ENCODE measurements at regions of chr3 and their contacts with region 1.

Region 1: GRCh38 chr3:122383771-122384697 is at the start of gene FAM162A:
- DNase-seq: peak; percentile 97
- ATAC-seq: peak; percentile 91
- H3K4me3 Mint-ChIP-seq: peak within 1 kb of the TSS; percentile 92
- H3K27ac Mint-ChIP-seq: peak within 1 kb of the TSS; percentile 98
- H3K4me1 Mint-ChIP-seq: peaks cover 66% of the 10 kb centered on the region
- H3K27me3 Mint-ChIP-seq: no peaks in the 10 kb centered on the region
- total RNA-seq, gene FAM162A: 163 to 181 TPM

Region 2: GRCh38 chr3:120742198-120742849 is 1641.7 kb before region 1 on chr3 and contains the starts of genes GTF2E1 and RABL3:
- CTCF ChIA-PET with region 1: no interaction called
- POLR2A ChIA-PET with region 1: no interaction called
- intact Hi-C with region 1: loop called in 1 of 2 experiments (anchors 2 kb)
- DNase-seq: peak; percentile 96
- ATAC-seq: peak; percentile 99
- H3K4me3 Mint-ChIP-seq: peak within 1 kb of the TSS; percentile 98
- H3K27ac Mint-ChIP-seq: peak within 1 kb of the TSS; percentile 95
- H3K4me1 Mint-ChIP-seq: peaks cover 28% of the 10 kb centered on the region
- H3K27me3 Mint-ChIP-seq: no peaks in the 10 kb centered on the region
- total RNA-seq, gene GTF2E1: 26.1 to 27.0 TPM
- total RNA-seq, gene RABL3: 35.5 to 37.8 TPM

Region 3: DNA sequence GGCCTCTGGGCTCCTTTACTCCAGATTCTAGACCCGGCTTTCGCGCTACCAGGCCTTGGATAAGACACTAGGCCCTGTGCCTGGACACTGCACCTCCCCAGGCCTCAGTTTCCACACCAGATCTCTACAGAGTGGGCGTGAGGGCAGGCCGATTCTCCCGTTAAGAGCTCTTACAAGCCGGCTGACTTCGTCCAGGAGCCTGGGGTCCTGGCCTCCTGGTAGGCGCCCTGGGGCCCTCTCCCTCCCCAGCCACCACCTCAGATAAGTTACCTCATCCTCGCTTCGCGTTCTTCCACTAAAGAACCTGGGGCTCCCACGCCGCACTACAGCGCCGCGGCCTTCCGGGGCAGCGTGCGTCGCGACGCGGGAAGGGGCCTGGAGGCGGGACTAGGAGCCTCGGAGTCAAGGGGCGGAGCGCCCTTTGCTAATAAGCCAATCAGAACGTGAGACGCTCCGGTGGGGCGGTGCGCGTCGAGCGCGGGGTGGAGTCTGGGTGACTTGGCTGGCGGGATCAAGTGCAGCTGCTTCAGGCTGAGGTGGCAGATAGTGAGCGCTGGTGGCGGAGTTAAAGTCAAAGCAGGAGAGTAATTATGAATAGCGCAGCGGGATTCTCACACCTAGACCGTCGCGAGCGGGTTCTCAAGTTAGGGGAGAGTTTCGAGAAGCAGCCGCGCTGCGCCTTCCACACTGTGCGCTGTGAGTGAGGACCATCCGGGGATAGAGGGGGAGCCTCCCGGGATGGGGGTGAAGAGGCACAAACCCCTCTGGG is 549.2 kb before region 1 on chr3 and contains the starts of genes EAF2 and IQCB1:
- CTCF ChIA-PET with region 1: no interaction called
- POLR2A ChIA-PET with region 1: no interaction called
- intact Hi-C with region 1: loop called in 1 of 2 experiments (anchors 1 kb)
- DNase-seq: peak; percentile 98
- ATAC-seq: peak; percentile 98
- H3K4me3 Mint-ChIP-seq: peak within 1 kb of the TSS; percentile 98
- H3K27ac Mint-ChIP-seq: peak within 1 kb of the TSS; percentile 94
- H3K4me1 Mint-ChIP-seq: peaks cover 38% of the 10 kb centered on the region
- H3K27me3 Mint-ChIP-seq: no peaks in the 10 kb centered on the region
- total RNA-seq, gene EAF2: 12.4 to 12.9 TPM
- total RNA-seq, gene IQCB1: 41.3 to 42.8 TPM

Region 4: GRCh38 chr3:122365073-122365472 is 19.0 kb before region 1 on chr3:
- CTCF ChIA-PET with region 1: interaction called, 5 read pairs
- POLR2A ChIA-PET with region 1: interaction called, 3 read pairs
- intact Hi-C with region 1: loop called in 1 of 2 experiments (anchors 2 kb)
- DNase-seq: no peak
- ATAC-seq: peak; percentile 73
- H3K4me3 Mint-ChIP-seq: no peak overlapping the region
- H3K27ac Mint-ChIP-seq: peak overlapping the region; percentile 93
- H3K4me1 Mint-ChIP-seq: peaks cover 34% of the 10 kb centered on the region
- H3K27me3 Mint-ChIP-seq: no peaks in the 10 kb centered on the region

Region 5: DNA sequence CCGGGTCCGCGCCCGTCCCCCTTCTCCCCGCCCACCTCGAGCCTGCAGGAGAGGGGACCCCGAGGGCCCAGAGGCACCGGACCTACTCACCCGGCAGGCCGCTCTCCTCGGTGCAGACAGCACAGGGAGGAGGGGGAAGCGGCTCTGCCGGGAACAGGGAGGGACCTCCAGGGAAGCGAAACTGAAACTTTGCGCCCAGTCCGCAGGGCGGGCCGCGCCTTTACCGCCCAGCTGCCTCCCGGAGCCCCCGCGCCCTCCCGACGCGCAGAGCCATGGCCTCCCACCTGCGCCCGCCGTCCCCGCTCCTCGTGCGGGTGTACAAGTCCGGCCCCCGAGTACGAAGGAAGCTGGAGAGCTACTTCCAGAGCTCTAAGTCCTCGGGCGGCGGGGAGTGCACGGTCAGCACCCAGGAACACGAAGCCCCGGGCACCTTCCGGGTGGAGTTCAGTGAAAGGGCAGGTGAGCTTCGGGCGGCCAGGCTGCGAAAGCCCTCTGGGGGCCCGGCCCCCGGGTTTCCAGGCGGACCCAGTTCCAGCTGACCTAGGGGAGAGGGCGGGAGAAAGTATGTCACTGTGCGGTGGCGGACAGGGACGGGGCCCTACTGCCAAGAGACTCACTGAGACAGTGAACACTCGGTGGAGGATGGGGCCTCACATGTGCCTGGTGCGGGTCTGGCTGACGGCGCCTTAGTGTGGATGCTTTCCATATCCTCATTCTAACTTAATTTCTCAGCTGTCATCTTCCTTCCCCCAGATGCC is 180.3 kb after region 1 on chr3 and contains the starts of genes DTX3L and PARP9:
- CTCF ChIA-PET with region 1: no interaction called
- POLR2A ChIA-PET with region 1: no interaction called
- intact Hi-C with region 1: loop called in 1 of 2 experiments (anchors 1 kb)
- DNase-seq: peak; percentile 89
- ATAC-seq: peak; percentile 83
- H3K4me3 Mint-ChIP-seq: peak within 1 kb of the TSS; percentile 83
- H3K27ac Mint-ChIP-seq: peak within 1 kb of the TSS; percentile 97
- H3K4me1 Mint-ChIP-seq: peaks cover 67% of the 10 kb centered on the region
- H3K27me3 Mint-ChIP-seq: no peaks in the 10 kb centered on the region
- total RNA-seq, gene DTX3L: 42.0 to 52.0 TPM
- total RNA-seq, gene PARP9: 39.9 to 46.0 TPM

Region 6: GRCh38 chr3:123314359-123315270 is 930.6 kb after region 1 on chr3:
- CTCF ChIA-PET with region 1: no interaction called
- POLR2A ChIA-PET with region 1: no interaction called
- intact Hi-C with region 1: no loop called
- DNase-seq: no peak
- ATAC-seq: no peak
- H3K4me3 Mint-ChIP-seq: no peak overlapping the region
- H3K27ac Mint-ChIP-seq: no peak overlapping the region
- H3K4me1 Mint-ChIP-seq: no peaks in the 10 kb centered on the region
- H3K27me3 Mint-ChIP-seq: peaks cover 2% of the 10 kb centered on the region

Region 7: GRCh38 chr3:123584988-123585937 is 1201.2 kb after region 1 on chr3 and contains the start of gene HACD2:
- CTCF ChIA-PET with region 1: no interaction called
- POLR2A ChIA-PET with region 1: no interaction called
- intact Hi-C with region 1: loop called in 1 of 2 experiments (anchors 1 kb)
- DNase-seq: peak; percentile 97
- ATAC-seq: peak; percentile 93
- H3K4me3 Mint-ChIP-seq: no peak within 1 kb of the TSS
- H3K27ac Mint-ChIP-seq: peak within 1 kb of the TSS; percentile 87
- H3K4me1 Mint-ChIP-seq: peaks cover 21% of the 10 kb centered on the region
- H3K27me3 Mint-ChIP-seq: no peaks in the 10 kb centered on the region
- total RNA-seq, gene HACD2: 22.1 to 27.7 TPM

Measured in activated CD4-positive, alpha-beta T cell treated with anti-CD3 and anti-CD28 coated beads for 36 hours (primary cell).